HepG2 (cell line): ENCODE measurements at regions of chr22 and their contacts with region 1.

Region 1: DNA sequence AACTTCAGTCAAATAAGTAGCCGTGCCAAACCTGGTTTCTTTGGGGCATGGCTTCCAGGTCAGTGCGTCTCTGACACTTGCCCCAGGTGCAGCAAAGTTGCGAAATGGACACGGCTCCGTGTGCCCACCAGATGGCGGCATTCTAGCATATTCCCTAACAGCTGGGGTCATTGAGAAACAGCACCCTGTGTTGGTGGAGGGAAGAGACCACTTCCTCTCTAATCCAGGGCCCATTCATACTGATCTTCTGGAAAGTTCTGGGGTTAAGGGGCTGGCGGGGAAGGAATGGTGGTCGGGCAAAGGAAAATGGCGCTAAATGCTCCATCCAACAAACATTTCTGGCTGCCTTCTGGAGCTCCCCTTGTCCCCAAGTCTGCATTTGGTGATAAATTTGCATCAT is 141.2 kb upstream of the TIMP3 start:
- DNase-seq: peak; percentile 78
- ATAC-seq: peak; percentile 92
- H3K4me3 ChIP-seq: no peak overlapping the region
- H3K27ac ChIP-seq: no peak overlapping the region
- H3K4me1 ChIP-seq: peaks cover 18% of the 10 kb centered on the region
- H3K27me3 ChIP-seq: no peaks in the 10 kb centered on the region
- CTCF ChIP-seq: peak; percentile 97
- EP300 ChIP-seq: peak; percentile 25 to 63; a peak in 1 of 4 replicates
- POLR2A ChIP-seq: no peak
- RAD21 ChIP-seq: peak; percentile 97

Region 2: DNA sequence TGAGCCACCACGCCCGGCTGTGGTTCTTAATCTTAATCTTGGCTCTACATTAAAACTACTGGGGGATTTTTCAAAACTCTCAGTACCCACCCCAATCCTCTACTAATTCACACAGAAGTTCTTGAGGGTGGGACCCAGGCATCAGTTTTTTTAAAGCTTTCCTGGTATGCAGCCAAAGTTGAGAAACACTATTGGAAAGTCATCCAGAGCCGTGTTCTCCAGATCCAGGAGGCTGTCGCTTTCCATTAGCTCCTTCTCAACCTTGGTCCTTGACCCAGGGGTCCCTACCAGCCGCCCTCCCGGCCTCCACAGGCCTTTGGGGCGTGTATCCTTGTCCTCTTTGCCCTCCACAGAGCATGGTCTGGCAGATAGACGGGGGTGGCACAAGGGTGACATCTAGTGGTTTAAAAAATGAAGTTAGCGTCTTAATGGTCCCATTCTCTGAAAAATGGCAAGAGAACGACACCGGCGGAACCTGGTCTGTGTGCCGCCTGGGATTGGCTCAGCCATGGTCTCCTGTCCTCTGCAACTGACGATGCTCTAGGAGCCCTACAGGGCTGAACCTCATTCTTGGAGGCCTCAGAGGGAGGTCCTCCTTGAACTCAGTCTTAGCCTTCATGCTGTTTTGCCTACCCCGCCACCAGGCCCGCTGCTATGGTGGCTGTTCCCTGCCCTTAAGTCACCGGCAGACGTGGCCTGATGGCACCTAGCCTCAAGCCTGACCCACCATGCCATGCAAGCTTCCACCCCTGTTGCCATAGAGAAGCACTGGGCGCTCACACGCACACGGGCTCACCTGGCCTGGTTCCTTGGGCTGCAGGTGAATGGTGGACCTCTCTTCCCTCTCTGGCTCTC is 549.9 kb after region 1 on chr22:
- CTCF ChIA-PET with region 1: no interaction called
- POLR2A ChIA-PET with region 1: no interaction called
- in situ Hi-C with region 1: loop called (anchors 25 kb)
- intact Hi-C with region 1: no loop called
- DNase-seq: peak; percentile 47
- ATAC-seq: peak; percentile 95
- H3K4me3 ChIP-seq: no peak overlapping the region
- H3K27ac ChIP-seq: no peak overlapping the region
- H3K4me1 ChIP-seq: no peaks in the 10 kb centered on the region
- H3K27me3 ChIP-seq: peaks cover 0 to 37% of the 10 kb centered on the region in 2 experiments; a peak in 2 of 5 replicates
- CTCF ChIP-seq: peak; percentile 81
- EP300 ChIP-seq: no peak
- POLR2A ChIP-seq: no peak
- RAD21 ChIP-seq: peak; percentile 58